ENCODE measurements at regions of chr1 and their contacts with region 1.

Region 1: DNA sequence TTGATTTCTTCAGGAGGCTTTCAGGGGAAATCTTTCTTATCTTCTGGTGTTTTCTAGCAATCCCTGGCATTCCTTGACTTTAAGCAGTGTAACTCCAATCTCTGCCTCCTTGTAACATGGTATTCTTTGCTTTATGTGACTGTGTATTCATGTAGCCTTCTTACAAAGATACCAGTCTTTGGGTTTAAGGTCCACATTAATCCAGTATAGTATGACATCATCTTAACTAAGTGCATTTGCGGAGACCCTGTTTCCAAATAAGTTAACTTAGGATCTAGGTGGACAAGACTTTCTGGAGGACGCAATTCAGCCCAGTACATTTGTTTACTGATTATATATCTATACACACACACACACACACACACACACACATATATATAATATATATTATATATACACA is 905.4 kb downstream of the BRINP3 start:
- DNase-seq: no peak
- H3K4me3 ChIP-seq: no peak overlapping the region
- H3K27ac ChIP-seq: no peak overlapping the region
- H3K27me3 ChIP-seq: no peaks in the 10 kb centered on the region
- CTCF ChIP-seq: no peak

Region 2: GRCh38 chr1:189550498-189550897 is 21.7 kb before region 1 on chr1:
- intact Hi-C with region 1: loop called in 1 of 2 experiments (anchors 2 kb)
- DNase-seq: no peak
- H3K4me3 ChIP-seq: no peak overlapping the region
- H3K27ac ChIP-seq: no peak overlapping the region
- H3K27me3 ChIP-seq: no peaks in the 10 kb centered on the region
- CTCF ChIP-seq: no peak

Region 3: GRCh38 chr1:189726806-189727205 is 154.6 kb after region 1 on chr1:
- intact Hi-C with region 1: no loop called
- DNase-seq: no peak
- H3K4me3 ChIP-seq: no peak overlapping the region
- H3K27ac ChIP-seq: no peak overlapping the region
- H3K27me3 ChIP-seq: no peaks in the 10 kb centered on the region
- CTCF ChIP-seq: no peak